ENCODE measurements at regions of chr7 and their contacts with region 1.

Region 1: DNA sequence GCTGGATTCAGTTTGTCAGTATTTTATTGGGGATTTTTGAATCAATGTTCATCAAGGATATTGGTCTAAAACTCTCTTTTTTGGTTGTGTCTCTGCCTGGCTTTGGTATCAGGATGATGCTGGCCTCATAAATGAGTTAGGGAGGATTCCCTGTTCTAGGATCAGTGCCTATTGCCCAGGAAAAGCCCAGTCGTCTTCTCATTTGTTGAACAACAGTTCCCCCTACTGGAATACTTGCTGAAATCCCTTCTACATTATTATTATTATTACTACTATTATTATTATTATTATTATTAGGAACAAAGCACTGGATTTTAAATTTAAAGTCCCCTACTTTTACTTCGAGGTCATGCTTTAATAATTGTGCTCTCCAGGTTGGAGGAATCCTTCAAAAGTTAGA is 528.9 kb downstream of the MAGI2 start:
- DNase-seq: peak; percentile 50
- ATAC-seq: no peak; the same call in 1 of the 2 replicates
- H3K4me3 ChIP-seq: no peak overlapping the region
- H3K27ac ChIP-seq: no peak overlapping the region
- H3K4me1 ChIP-seq: no peaks in the 10 kb centered on the region
- H3K27me3 ChIP-seq: no peaks in the 10 kb centered on the region; the same call in 1 of the 2 replicates
- CTCF ChIP-seq: peak; percentile 18; the same call in 1 of the 2 replicates

Region 2: DNA sequence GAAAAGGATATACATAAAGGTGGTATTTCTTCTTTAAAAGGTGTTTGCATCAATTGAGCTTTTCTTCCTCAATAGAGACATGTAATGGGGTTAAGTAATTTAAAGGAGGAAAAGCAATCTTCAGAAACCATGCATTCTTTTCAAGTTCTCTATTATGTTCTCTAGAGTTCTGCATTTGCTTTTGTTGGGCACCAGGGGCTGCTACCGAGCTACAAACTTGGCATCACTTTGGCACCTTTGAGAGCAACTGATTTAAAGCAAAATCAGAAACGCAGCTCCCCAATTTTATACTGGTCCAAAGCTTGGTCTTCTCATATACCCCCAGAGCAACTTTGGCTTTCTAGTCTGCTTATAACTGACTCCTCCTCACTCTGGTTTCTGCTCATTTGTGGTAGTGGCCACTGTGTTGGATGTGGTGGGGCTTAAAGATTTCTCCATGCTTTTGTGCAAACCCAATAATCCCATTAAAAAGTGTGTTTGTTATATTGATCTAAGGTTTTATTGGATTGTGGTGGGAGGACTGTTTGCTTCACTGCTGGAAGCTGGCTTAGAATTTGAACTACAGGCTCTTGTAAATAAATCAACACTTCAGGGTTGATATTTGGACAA is 413.9 kb before region 1 on chr7:
- CTCF ChIA-PET with region 1: no interaction called
- POLR2A ChIA-PET with region 1: no interaction called
- intact Hi-C with region 1: loop called (anchors 2 kb)
- DNase-seq: peak; percentile 47
- ATAC-seq: peak; percentile 74
- H3K4me3 ChIP-seq: no peak overlapping the region
- H3K27ac ChIP-seq: no peak overlapping the region
- H3K4me1 ChIP-seq: no peaks in the 10 kb centered on the region
- H3K27me3 ChIP-seq: 0 out of 2 replicates have a peak, but pooled peaks cover 5% of the 10 kb centered on the region
- CTCF ChIP-seq: peak; percentile 73

Region 3: DNA sequence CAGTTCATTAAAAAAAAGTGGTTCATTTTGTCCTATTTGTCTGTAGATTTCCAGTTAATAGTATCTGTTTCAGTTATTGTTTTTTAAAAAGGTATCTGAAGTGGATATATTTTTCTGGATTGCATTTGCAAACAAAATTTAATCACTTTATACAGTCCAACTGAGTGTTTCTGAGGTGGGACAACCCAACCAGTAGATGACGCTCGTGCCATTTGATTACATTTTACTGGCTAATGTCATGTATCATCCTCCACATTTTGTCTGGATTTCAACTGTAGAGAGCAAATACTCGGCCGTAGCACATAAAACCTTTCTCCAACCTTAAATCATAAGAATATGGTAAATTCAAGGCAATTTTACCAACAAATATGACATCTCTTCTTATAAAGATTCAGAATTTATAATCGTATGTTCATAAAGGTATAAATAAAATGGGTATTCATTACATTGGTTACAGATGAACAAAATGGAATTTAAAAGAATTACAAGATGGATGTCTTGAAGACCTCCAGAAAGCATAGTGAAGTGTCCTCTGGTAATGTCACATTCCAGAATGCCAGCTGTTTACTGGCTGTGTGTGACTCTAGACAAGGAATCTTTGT is 337.0 kb before region 1 on chr7:
- CTCF ChIA-PET with region 1: no interaction called
- POLR2A ChIA-PET with region 1: no interaction called
- intact Hi-C with region 1: loop called (anchors 1 kb)
- DNase-seq: peak; percentile 70
- ATAC-seq: peak; percentile 71
- H3K4me3 ChIP-seq: no peak overlapping the region
- H3K27ac ChIP-seq: no peak overlapping the region
- H3K4me1 ChIP-seq: no peaks in the 10 kb centered on the region
- H3K27me3 ChIP-seq: peaks cover 4% of the 10 kb centered on the region; the same call in 1 of the 2 replicates
- CTCF ChIP-seq: peak; percentile 88

Region 4: DNA sequence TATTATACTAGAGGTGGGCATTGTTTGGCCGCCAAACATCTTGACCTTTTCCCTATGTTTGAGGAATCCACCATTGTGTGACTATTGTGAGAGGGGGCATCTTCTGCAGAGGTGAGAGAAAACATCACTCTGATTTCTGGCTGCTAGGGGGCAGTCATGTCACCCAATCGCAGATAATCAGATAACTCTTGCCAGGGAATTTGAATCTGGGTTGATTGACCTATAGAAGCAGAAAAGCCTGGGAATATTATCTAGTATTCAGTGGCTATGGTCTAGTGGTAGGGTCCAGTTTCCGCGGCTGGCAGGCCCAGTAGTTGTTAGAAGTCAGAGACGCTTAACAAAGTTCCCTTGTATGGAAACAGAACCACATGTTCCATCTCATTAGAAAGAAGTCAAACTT is 317.5 kb before region 1 on chr7:
- CTCF ChIA-PET with region 1: no interaction called
- POLR2A ChIA-PET with region 1: no interaction called
- intact Hi-C with region 1: loop called (anchors 1 kb)
- DNase-seq: peak; percentile 48
- ATAC-seq: peak; percentile 51; the same call in 1 of the 2 replicates
- H3K4me3 ChIP-seq: no peak overlapping the region
- H3K27ac ChIP-seq: no peak overlapping the region
- H3K4me1 ChIP-seq: no peaks in the 10 kb centered on the region
- H3K27me3 ChIP-seq: peaks cover 5% of the 10 kb centered on the region
- CTCF ChIP-seq: peak; percentile 73

Region 5: DNA sequence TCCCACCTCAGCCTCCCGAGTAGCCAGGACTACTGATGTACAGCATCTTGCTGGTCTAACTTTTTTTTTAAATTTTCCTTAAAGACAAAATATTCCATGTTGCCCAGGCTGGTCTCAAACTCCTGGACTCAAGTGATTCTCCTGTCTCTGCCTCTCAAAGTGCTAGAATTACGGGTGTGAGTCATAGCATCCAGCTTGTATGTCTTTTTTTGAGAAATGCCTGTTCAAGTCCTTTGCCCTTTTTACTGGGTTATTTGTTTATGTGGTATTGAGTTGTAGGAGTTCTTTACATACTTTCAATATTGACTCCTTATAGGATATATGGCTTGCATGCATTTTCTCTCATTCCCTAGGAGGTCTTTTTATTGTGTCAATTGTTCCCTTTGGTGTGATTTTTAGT is 42.5 kb after region 1 on chr7:
- CTCF ChIA-PET with region 1: no interaction called
- POLR2A ChIA-PET with region 1: no interaction called
- intact Hi-C with region 1: no loop called
- DNase-seq: peak; percentile 62
- ATAC-seq: no peak
- H3K4me3 ChIP-seq: no peak overlapping the region
- H3K27ac ChIP-seq: peak overlapping the region; percentile 70
- H3K4me1 ChIP-seq: peaks cover 53% of the 10 kb centered on the region
- H3K27me3 ChIP-seq: no peaks in the 10 kb centered on the region
- CTCF ChIP-seq: no peak